ENCODE measurements at regions of chr12 and their contacts with region 1.

Region 1: GRCh38 chr12:122336015-122336946 is 70.0 kb upstream of the VPS33A start:
- DNase-seq: peak; percentile 64
- ATAC-seq: no peak

Region 2: GRCh38 chr12:122031342-122032216 is 304.7 kb before region 1 on chr12:
- intact Hi-C with region 1: no loop called
- DNase-seq: no peak
- ATAC-seq: peak; percentile 29

Region 3: DNA sequence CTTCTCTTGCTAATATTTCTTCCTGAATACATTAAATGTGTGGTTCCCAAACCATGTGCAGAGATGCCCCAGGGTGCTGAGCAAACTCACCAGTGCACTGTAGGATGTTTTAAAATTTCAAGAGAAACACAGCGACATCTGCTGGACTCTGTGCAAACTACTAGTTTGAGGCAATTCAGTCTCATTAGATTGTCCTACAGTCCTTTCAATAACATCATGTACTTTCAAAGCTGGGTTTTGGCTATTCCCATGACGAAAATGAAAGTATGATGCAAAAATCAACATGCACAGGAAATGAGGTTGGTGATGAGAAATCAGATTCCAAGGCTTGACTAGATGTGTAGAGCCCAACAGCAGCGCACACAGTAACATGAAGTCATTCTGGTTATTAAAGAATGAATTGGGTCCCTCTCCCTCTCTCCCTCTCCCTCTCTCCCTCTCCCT is 19.9 kb after region 1 on chr12:
- intact Hi-C with region 1: loop called (anchors 2 kb)
- DNase-seq: no peak
- ATAC-seq: peak; percentile 39

Region 4: DNA sequence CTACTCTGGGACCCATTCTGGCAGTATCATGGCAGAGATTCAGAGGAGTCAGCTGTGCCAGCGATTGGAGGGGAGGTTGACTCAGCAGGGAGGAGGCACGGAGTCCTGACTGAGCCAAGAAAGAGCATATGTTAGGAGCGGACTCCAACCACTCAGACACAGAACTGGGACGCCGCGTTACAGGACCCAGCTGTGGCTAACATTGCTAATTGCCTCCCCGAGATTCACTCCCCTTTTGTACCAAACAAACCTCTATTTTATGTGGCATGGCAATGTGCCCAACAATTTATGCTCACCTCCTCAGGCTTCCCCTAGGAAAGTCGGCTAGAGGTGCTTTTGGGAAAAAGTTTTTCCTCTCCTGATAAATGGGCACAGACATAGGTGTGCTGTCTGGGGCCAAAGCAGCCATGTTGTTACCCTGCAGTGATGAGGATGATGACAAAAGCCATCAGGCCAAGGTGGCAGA is 101.4 kb after region 1 on chr12:
- intact Hi-C with region 1: no loop called
- DNase-seq: peak; percentile 71
- ATAC-seq: peak; percentile 89

Region 5: DNA sequence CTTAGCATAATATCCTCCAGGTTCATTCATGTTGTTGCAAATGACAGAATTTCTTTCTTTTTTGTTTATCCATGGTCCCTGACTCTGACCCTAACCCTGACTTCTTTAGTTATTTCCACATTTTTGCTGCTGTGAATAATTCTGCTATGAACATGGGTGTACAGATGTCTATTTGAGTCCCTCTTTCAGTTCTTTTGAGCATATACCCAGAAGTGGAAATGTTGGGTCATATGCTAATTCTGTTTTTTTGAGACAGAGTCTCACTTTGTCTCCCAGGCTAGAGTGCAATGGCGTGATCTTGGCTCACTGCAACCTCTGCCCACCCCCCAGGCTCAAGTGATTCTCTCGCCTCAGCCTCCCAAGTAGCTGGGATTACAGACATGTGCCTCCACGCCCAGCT is 223.9 kb after region 1 on chr12:
- intact Hi-C with region 1: no loop called
- DNase-seq: no peak
- ATAC-seq: no peak